ENCODE measurements at regions of chr4 and their contacts with region 1.

Region 1: DNA sequence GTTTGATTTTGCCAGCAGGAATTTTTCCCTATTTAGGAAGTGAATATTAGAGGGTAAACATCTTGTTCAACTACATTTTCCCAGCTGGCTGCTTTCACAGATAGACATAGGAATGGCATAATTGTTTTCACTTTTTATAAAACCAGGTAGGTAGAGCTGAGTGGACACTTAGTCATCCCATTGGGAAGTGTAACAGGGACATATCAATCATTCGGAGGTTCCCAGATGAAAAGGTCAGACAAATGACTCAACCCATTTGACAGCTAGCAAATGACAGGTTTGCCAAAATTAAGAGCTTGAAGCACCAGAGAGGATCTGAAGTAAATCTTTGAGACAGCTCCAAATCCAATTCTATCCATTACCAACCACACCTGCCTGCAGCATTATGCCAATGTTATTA is 205.3 kb downstream of the SLC39A8 start:
- DNase-seq: no peak
- ATAC-seq: no peak

Region 2: GRCh38 chr4:102180046-102180445 is 40.1 kb after region 1 on chr4:
- intact Hi-C with region 1: no loop called
- DNase-seq: no peak
- ATAC-seq: no peak

Region 3: DNA sequence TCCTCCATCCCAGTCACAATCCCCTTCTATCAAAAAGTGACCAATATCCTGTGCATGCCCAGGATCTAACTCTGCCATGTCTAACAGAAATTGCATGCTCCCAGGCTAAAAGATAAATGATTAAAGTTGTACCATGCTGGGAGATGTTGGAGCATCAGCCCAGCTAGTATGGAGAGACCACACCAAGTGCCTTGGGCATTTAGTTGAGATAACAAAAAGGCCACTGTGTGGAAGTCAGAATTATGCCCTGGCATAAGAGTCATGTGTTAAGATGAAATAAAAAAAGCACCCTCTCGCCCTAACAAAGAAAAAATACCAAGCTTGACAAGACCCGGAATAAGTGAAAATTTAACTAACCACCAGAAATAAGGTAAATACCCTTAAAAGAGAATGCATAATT is 1214.1 kb after region 1 on chr4:
- intact Hi-C with region 1: loop called (anchors 10 kb)
- DNase-seq: no peak
- ATAC-seq: no peak

Measured in Right ventricle myocardium inferior (tissue), 1 donor.